ENCODE measurements at regions of chr6 and their contacts with region 1.

Region 1: GRCh38 chr6:133923938-133924593 is 29.0 kb upstream of the TBPL1 start:
- DNase-seq: peak; percentile 55 to 84 (median 65)
- ATAC-seq: peak; percentile 94
- H3K4me3 ChIP-seq: no peak overlapping the region
- H3K27ac ChIP-seq: no peak overlapping the region
- H3K4me1 ChIP-seq: no peaks in the 10 kb centered on the region
- H3K27me3 ChIP-seq: no peaks in the 10 kb centered on the region
- CTCF ChIP-seq: peak; percentile 77 to 95 (median 82)
- EP300 ChIP-seq: no peak
- POLR2A ChIP-seq: no peak
- RAD21 ChIP-seq: peak; percentile 99 to 100

Region 2: DNA sequence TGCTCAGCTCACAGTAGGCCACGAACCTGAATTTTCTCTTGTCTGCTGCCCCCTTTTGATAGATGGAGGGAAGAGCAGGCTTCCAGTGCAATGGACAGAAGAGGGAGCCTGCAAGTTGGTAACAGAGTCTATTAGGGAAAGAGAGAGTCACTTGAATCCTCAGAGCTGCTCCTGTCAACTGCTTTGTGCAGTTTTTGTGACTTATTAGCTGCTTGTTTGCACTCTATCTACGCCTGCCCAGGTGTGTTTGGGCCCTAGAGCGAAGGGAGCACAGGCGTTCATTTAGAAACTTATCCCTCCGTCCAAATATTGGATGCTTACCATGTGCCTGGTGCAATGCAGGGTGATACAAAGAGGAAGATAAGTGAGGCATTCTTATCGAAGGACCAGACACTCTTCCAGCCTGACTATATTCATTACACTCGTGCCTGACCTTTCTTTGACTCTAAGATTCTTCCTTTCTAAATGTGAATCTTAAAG is 139.9 kb after region 1 on chr6:
- CTCF ChIA-PET with region 1: interaction called, 12 read pairs
- POLR2A ChIA-PET with region 1: no interaction called
- in situ Hi-C with region 1: loop called (anchors 10 kb)
- intact Hi-C with region 1: loop called (anchors 1 kb)
- DNase-seq: peak; percentile 65 to 88 (median 74)
- ATAC-seq: peak; percentile 94
- H3K4me3 ChIP-seq: no peak overlapping the region
- H3K27ac ChIP-seq: peak overlapping the region; percentile 40; the same call in 1 of the 3 replicates
- H3K4me1 ChIP-seq: peaks cover 6 to 18% of the 10 kb centered on the region in 2 experiments; a peak in 3 of 5 replicates
- H3K27me3 ChIP-seq: no peaks in the 10 kb centered on the region
- CTCF ChIP-seq: peak; percentile 90 to 99 (median 99)
- EP300 ChIP-seq: no peak
- POLR2A ChIP-seq: no peak
- RAD21 ChIP-seq: peak; percentile 76 to 89

Region 3: DNA sequence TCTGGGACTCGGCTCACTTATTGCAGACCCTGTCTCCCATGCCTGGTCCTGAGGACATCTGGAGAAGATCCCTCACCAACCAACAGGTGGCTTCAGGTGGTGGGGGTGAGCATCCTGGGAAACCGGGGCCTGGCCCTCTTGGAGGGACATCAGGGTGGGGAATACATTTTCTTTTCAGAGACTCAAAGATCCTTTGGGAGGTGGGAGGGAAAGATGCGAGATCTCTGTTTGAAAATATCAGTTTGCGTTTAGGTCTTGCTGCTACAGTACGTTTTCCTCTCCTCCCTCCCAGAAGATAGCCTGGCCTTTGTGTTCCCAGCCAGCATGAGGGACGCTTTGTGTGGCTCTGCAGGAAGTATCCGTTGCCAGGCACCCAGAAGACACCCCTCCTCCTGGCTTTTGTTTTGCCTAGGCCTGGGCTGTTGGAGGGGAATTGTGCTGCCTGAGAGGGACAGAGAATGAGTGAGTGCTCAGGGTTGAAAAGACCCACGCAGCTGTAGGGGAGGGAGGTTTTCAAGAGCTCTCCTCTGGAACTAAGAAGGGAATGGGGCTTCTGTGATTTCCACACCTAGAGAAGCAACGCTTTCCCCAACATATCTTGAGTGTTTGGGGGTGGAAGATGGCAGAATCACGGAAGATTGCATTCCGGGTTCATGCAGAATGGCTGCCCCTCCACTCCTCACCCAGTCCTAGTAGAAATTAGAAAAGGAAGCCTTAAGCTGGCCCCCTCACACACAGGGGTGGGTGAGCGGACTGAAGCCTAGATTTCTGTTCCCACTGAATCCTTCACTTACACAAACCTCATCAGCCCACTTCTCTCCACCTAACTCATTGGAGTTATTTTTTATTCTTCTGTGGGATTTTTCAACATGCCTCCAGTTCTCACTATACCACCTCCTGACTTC is 150.3 kb after region 1 on chr6:
- CTCF ChIA-PET with region 1: interaction called, 3 read pairs
- POLR2A ChIA-PET with region 1: no interaction called
- in situ Hi-C with region 1: loop called (anchors 10 kb)
- intact Hi-C with region 1: loop called (anchors 5 kb)
- DNase-seq: no peak
- ATAC-seq: peak; percentile 56
- H3K4me3 ChIP-seq: no peak overlapping the region
- H3K27ac ChIP-seq: no peak overlapping the region
- H3K4me1 ChIP-seq: peaks cover 0 to 13% of the 10 kb centered on the region in 2 experiments; a peak in 4 of 5 replicates
- H3K27me3 ChIP-seq: no peaks in the 10 kb centered on the region
- CTCF ChIP-seq: no peak
- EP300 ChIP-seq: no peak
- POLR2A ChIP-seq: no peak
- RAD21 ChIP-seq: no peak

Region 4: GRCh38 chr6:134949927-134950326 is 1025.9 kb after region 1 on chr6 and contains the start of gene ALDH8A1:
- CTCF ChIA-PET with region 1: no interaction called
- POLR2A ChIA-PET with region 1: no interaction called
- in situ Hi-C with region 1: no loop called
- intact Hi-C with region 1: loop called (anchors 10 kb)
- DNase-seq: no peak
- ATAC-seq: peak; percentile 22; the same call in 1 of the 3 replicates
- H3K4me3 ChIP-seq: no peak within 1 kb of the TSS
- H3K27ac ChIP-seq: no peak within 1 kb of the TSS
- H3K4me1 ChIP-seq: no peaks in the 10 kb centered on the region; a peak in 1 of 5 replicates
- H3K27me3 ChIP-seq: no peaks in the 10 kb centered on the region
- CTCF ChIP-seq: no peak
- EP300 ChIP-seq: no peak
- POLR2A ChIP-seq: no peak
- RAD21 ChIP-seq: no peak
- polyA plus RNA-seq, gene ALDH8A1: 0.03 TPM in 1 of 2 experiments, not detected in the other